T-cell (primary cell): ENCODE measurements at regions of chr2 and their contacts with region 1.

Region 1: DNA sequence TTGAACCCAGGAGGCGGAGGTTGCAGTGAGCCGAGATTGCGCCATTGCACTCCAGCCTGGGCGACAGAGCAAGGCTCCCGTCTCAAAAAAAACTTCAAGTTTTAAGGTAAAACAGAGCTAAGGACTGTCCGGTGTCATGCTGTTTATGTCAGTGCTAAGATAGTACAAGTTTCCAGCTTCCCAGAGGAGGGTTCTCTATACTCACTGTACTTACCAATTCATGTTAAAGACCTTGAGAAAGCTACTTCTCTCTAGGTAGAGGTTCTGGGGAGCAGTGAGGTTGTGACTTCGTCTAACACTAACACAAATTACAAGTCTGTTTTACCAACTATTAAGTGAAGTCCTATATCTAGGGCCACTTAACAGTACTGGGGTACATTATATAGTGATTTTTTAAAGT is 18.8 kb downstream of the METTL21A start:
- DNase-seq: no peak
- ATAC-seq: no peak
- H3K4me3 ChIP-seq: no peak overlapping the region
- H3K4me3 Mint-ChIP-seq: no peak overlapping the region
- H3K27ac ChIP-seq: no peak overlapping the region
- H3K27ac Mint-ChIP-seq: no peak overlapping the region
- H3K4me1 ChIP-seq: no peaks in the 10 kb centered on the region
- H3K4me1 Mint-ChIP-seq: peaks cover 12 to 25% (median 18%) of the 10 kb centered on the region in 3 donors
- H3K27me3 ChIP-seq: no peaks in the 10 kb centered on the region
- H3K27me3 Mint-ChIP-seq: no peaks in the 10 kb centered on the region

Region 2: DNA sequence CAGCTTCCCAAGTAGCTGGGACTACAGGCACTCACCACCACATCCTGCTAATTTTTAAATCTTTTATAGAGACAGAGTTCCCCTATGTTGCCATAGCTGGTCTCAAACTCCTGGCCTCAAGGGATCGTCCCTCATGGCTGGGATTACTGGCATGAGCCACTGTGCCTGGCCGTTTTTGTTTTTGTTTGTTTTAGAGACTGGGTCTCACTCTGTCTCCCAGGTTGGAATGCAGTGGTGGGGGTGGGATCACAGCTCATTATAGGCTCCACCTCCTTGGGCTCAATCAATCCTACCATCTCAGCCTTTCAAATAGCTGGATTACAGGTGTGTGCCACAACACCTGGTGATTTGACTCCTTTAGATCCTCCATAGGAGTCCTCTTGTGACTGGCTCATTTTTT is 1351.4 kb before region 1 on chr2:
- CTCF ChIA-PET with region 1: interaction called in 1 of 2 experiments, 10 read pairs
- POLR2A ChIA-PET with region 1: no interaction called
- DNase-seq: no peak
- ATAC-seq: no peak
- H3K4me3 ChIP-seq: no peak overlapping the region
- H3K4me3 Mint-ChIP-seq: no peak overlapping the region
- H3K27ac ChIP-seq: no peak overlapping the region
- H3K27ac Mint-ChIP-seq: no peak overlapping the region
- H3K4me1 ChIP-seq: peaks cover 0 to 8% of the 10 kb centered on the region in 2 experiments
- H3K4me1 Mint-ChIP-seq: peaks cover 8 to 19% (median 9%) of the 10 kb centered on the region in 3 donors
- H3K27me3 ChIP-seq: peaks cover 12 to 51% of the 10 kb centered on the region in 2 experiments
- H3K27me3 Mint-ChIP-seq: peaks cover 56 to 74% of the 10 kb centered on the region in 2 donors

Region 3: GRCh38 chr2:207692206-207693065 is 86.0 kb after region 1 on chr2:
- CTCF ChIA-PET with region 1: no interaction called
- POLR2A ChIA-PET with region 1: no interaction called
- DNase-seq: peak; percentile 11 to 68 (median 36)
- ATAC-seq: peak; percentile 55 to 73 (median 68)
- H3K4me3 ChIP-seq: no peak overlapping the region
- H3K4me3 Mint-ChIP-seq: no peak overlapping the region
- H3K27ac ChIP-seq: no peak overlapping the region
- H3K27ac Mint-ChIP-seq: peak overlapping the region in 1 of 2 donors; percentile 8
- H3K4me1 ChIP-seq: no peaks in the 10 kb centered on the region
- H3K4me1 Mint-ChIP-seq: peaks cover 0 to 4% (median 3%) of the 10 kb centered on the region in 3 donors
- H3K27me3 ChIP-seq: peaks cover 0 to 4% of the 10 kb centered on the region in 2 experiments
- H3K27me3 Mint-ChIP-seq: no peaks in the 10 kb centered on the region